Ascending aorta (tissue), 2 donors: ENCODE measurements at regions of chr5 and their contacts with region 1.

Region 1: GRCh38 chr5:139417214-139417613 is 13.3 kb upstream of the SPATA24 start:
- DNase-seq: peak in 1 of 2 donors; percentile 83
- H3K4me3 ChIP-seq: no peak overlapping the region
- H3K27ac ChIP-seq: peak overlapping the region; percentile 74 to 76
- H3K4me1 ChIP-seq: peaks cover 10 to 36% of the 10 kb centered on the region in 2 donors
- H3K27me3 ChIP-seq: no peaks in the 10 kb centered on the region
- CTCF ChIP-seq: no peak

Region 2: GRCh38 chr5:138230981-138231589 is 1186.1 kb before region 1 on chr5:
- intact Hi-C with region 1: no loop called
- DNase-seq: no peak
- H3K4me3 ChIP-seq: no peak overlapping the region
- H3K27ac ChIP-seq: no peak overlapping the region
- H3K4me1 ChIP-seq: no peaks in the 10 kb centered on the region
- H3K27me3 ChIP-seq: no peaks in the 10 kb centered on the region
- CTCF ChIP-seq: no peak

Region 3: GRCh38 chr5:138349852-138350562 is 1067.2 kb before region 1 on chr5:
- intact Hi-C with region 1: no loop called
- DNase-seq: no peak
- H3K4me3 ChIP-seq: no peak overlapping the region
- H3K27ac ChIP-seq: peak overlapping the region; percentile 65 to 98
- H3K4me1 ChIP-seq: peaks cover 4 to 22% of the 10 kb centered on the region in 2 donors
- H3K27me3 ChIP-seq: no peaks in the 10 kb centered on the region
- CTCF ChIP-seq: no peak

Region 4: DNA sequence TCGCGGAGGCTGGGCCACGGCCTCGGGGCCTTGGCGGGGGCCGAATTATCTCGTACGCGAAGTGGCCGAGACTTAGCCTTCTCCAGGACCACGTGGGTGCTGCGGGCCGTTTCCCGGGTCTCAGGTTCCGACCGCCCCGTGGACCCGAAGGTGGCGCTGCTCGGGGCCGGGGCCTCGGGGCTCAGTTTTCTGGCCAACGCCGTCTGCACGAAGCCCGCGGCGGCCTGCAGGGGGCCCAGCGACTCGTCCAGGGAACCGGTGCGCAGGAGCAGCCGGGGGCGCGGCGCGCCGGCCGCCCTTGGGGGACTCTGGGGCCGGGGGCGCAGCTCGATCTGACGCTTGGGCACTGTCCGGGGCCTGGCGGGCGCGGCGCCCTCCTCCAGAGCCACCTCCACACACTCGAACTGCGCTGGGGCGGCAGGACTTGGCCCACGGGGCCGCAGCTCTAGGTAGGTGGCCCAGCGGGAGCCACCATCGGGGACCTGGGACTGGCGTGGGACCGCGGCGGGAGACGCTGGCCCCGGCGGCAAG is 23.0 kb before region 1 on chr5:
- intact Hi-C with region 1: loop called (anchors 1 kb)
- DNase-seq: peak in 1 of 2 donors; percentile 74
- H3K4me3 ChIP-seq: peak overlapping the region; percentile 59 to 65
- H3K27ac ChIP-seq: peak overlapping the region in 1 of 2 donors; percentile 9
- H3K4me1 ChIP-seq: peaks cover 0 to 26% of the 10 kb centered on the region in 2 donors
- H3K27me3 ChIP-seq: no peaks in the 10 kb centered on the region
- CTCF ChIP-seq: peak in 2 of 3 experiments; percentile 20 to 50